ENCODE measurements at regions of chr4 and their contacts with region 1.

Region 1: GRCh38 chr4:112321776-112322684 is 24.9 kb downstream of the ALPK1 start:
- DNase-seq: no peak
- ATAC-seq: peak; percentile 44
- H3K4me3 ChIP-seq: no peak overlapping the region
- H3K27ac ChIP-seq: no peak overlapping the region
- H3K4me1 ChIP-seq: peaks cover 29% of the 10 kb centered on the region
- H3K27me3 ChIP-seq: no peaks in the 10 kb centered on the region
- CTCF ChIP-seq: peak; percentile 76 to 87 (median 77)
- EP300 ChIP-seq: no peak
- POLR2A ChIP-seq: no peak
- RAD21 ChIP-seq: peak; percentile 80

Region 2: DNA sequence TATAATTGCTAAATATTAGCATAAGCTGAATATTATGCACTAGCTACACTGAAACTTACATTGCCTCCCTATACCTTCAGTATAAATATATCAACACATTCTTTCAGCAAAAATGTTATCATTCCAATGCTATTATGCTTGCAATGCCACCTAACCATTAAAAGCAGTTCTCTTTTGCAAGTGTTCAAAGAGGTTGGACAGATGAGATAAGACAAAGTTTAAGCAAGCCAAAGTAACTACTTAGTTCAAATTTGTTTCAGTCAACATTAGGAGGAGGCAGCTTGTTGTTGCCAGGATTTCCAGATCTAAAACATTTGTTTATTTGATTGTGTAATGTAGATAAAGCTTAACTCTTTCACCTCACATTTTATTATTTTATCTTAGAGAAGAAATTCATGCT is 500.7 kb before region 1 on chr4:
- CTCF ChIA-PET with region 1: no interaction called
- POLR2A ChIA-PET with region 1: no interaction called
- RAD21 ChIA-PET with region 1: no interaction called
- SMC1A ChIA-PET with region 1: no interaction called
- in situ Hi-C with region 1: no loop called
- intact Hi-C with region 1: no loop called
- DNase-seq: no peak
- ATAC-seq: no peak
- H3K4me3 ChIP-seq: no peak overlapping the region
- H3K27ac ChIP-seq: no peak overlapping the region
- H3K4me1 ChIP-seq: no peaks in the 10 kb centered on the region
- H3K27me3 ChIP-seq: no peaks in the 10 kb centered on the region
- CTCF ChIP-seq: no peak
- EP300 ChIP-seq: no peak
- POLR2A ChIP-seq: no peak
- RAD21 ChIP-seq: no peak

Region 3: DNA sequence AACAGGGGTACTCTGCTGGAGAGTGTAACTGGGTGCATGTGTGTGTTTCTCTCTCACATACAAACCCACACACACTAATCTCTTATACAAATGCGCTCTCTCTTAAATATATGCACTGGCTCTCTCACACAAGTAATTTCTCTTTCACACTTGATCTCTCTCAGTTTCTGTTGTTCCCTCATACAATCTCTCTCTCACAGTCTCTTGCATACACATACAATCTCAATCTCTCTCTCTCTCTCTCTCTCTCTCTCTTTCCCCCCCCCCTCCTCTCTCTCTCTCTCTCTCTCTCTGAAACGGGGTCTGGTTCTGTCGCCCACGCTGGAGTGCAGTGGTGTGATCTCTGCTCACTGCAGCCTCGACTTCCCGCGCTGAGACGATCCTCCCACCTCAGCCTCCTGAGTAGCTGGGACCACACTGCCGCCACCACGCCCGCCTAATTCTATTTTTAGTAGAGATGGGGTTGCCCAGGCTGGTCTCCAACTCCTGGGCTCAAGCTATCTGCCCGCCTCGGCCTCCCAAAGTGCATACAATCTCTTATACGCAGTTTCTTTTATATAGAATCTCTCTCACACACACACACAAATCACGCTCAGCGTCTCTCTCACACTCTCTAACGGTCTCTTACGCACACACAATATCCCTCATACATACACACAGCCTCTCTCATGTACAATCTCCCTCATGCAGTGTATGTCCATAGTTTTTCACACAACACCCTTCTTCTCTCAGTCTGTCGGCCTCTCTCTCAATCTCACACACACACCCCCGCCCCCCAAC is 177.3 kb before region 1 on chr4:
- CTCF ChIA-PET with region 1: no interaction called
- POLR2A ChIA-PET with region 1: no interaction called
- RAD21 ChIA-PET with region 1: no interaction called
- SMC1A ChIA-PET with region 1: no interaction called
- in situ Hi-C with region 1: no loop called
- intact Hi-C with region 1: no loop called
- DNase-seq: peak; percentile 16
- ATAC-seq: no peak
- H3K4me3 ChIP-seq: no peak overlapping the region; the same call in 1 of the 2 replicates
- H3K27ac ChIP-seq: no peak overlapping the region
- H3K4me1 ChIP-seq: peaks cover 5% of the 10 kb centered on the region; the same call in 1 of the 2 replicates
- H3K27me3 ChIP-seq: peaks cover 0 to 2% of the 10 kb centered on the region in 2 experiments; a peak in 2 of 4 replicates
- CTCF ChIP-seq: no peak
- EP300 ChIP-seq: no peak
- POLR2A ChIP-seq: no peak
- RAD21 ChIP-seq: no peak

Region 4: DNA sequence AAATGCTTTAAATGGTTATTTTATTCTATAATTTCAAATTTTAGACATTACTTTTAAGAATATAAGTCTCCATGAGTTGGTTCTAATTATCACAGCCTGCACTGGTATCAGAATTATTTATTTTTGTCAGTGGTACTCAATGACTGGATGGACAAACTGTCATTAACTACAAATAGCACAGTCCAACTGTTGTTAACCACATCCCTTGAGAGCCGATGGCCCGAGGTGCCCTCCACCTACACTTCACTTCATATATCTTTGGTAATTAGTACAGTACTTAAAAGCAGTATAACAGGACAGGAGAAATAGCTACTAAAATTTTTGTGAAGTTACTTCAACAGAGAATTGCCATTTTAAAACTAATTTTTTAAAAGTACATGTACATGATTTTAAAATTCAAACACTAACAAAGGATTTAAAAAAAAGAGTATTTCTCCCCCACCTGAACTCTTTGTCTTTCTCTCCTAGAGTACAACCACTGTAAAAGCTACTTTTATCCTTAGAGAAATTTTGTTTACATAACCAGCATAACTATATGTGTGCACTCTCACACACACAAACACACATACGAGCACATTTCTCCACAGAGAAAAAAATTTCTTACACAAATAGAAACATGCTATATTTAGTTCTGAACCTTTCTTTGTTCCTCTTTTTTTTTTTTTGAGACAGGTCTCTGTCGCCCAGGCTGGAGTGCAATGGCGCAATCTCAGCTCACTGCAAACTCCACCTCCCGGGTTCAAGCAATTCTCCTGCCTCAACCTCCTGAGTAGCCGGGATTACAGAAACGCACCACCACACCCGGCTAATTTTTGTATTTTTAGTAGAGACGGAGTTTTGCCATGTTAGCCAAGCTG is 42.8 kb before region 1 on chr4:
- CTCF ChIA-PET with region 1: interaction called, 21 read pairs
- POLR2A ChIA-PET with region 1: interaction called, 25 read pairs
- RAD21 ChIA-PET with region 1: interaction called, 151 read pairs
- SMC1A ChIA-PET with region 1: interaction called, 247 read pairs
- in situ Hi-C with region 1: loop called (anchors 5 kb)
- intact Hi-C with region 1: no loop called
- DNase-seq: no peak
- ATAC-seq: peak; percentile 65
- H3K4me3 ChIP-seq: peak overlapping the region; percentile 80
- H3K27ac ChIP-seq: peak overlapping the region; percentile 99
- H3K4me1 ChIP-seq: peaks cover 33% of the 10 kb centered on the region
- H3K27me3 ChIP-seq: no peaks in the 10 kb centered on the region
- CTCF ChIP-seq: no peak
- EP300 ChIP-seq: peak; percentile 46 to 49; a peak in 2 of 4 replicates
- POLR2A ChIP-seq: no peak
- RAD21 ChIP-seq: no peak

Region 5: DNA sequence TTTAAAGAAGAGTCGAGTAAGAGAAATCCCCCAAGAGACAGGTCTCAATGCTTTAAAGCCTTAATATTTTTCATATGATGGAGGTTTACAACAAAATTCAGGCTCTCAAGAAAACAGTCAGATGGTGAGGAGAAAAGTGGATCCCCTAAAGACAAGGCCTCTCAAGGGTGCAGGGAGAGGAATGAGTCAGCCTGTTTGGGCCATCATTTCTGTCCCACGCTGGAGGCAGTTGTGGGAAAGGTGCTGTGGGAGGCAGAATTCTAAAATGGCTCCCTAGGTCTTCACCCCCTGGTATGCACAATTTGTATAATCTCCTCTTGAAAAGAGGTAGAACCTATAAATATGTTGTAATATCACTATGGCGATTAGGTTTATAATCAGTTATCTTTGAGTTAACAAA is 31.7 kb before region 1 on chr4:
- CTCF ChIA-PET with region 1: interaction called, 27 read pairs
- POLR2A ChIA-PET with region 1: interaction called, 25 read pairs
- RAD21 ChIA-PET with region 1: interaction called, 151 read pairs
- SMC1A ChIA-PET with region 1: interaction called, 247 read pairs
- in situ Hi-C with region 1: no loop called
- intact Hi-C with region 1: loop called (anchors 1 kb)
- DNase-seq: no peak
- ATAC-seq: peak; percentile 14
- H3K4me3 ChIP-seq: 0 out of 2 replicates have a peak overlapping the region, but pooled peaks have one; percentile 37
- H3K27ac ChIP-seq: peak overlapping the region; percentile 99
- H3K4me1 ChIP-seq: peaks cover 24% of the 10 kb centered on the region
- H3K27me3 ChIP-seq: no peaks in the 10 kb centered on the region
- CTCF ChIP-seq: no peak
- EP300 ChIP-seq: no peak
- POLR2A ChIP-seq: no peak
- RAD21 ChIP-seq: 0 out of 2 replicates have a peak, but pooled peaks have one; percentile 18

Region 6: GRCh38 chr4:112296949-112297880 is 24.8 kb before region 1 on chr4 and contains the start of gene ALPK1:
- CTCF ChIA-PET with region 1: interaction called, 9 read pairs
- POLR2A ChIA-PET with region 1: interaction called, 9 read pairs
- RAD21 ChIA-PET with region 1: interaction called, 41 read pairs
- SMC1A ChIA-PET with region 1: interaction called, 74 read pairs
- in situ Hi-C with region 1: no loop called
- intact Hi-C with region 1: no loop called
- DNase-seq: no peak
- ATAC-seq: peak; percentile 89
- H3K4me3 ChIP-seq: peak within 1 kb of the TSS; percentile 67
- H3K27ac ChIP-seq: peak within 1 kb of the TSS; percentile 62
- H3K4me1 ChIP-seq: peaks cover 7% of the 10 kb centered on the region
- H3K27me3 ChIP-seq: no peaks in the 10 kb centered on the region
- CTCF ChIP-seq: no peak
- EP300 ChIP-seq: no peak
- POLR2A ChIP-seq: no peak
- RAD21 ChIP-seq: no peak
- polyA plus RNA-seq, gene ALPK1: 8.5 to 9.7 TPM

Region 7: GRCh38 chr4:112302320-112303274 is 19.4 kb before region 1 on chr4:
- CTCF ChIA-PET with region 1: interaction called, 9 read pairs
- POLR2A ChIA-PET with region 1: interaction called, 9 read pairs
- RAD21 ChIA-PET with region 1: interaction called, 41 read pairs
- SMC1A ChIA-PET with region 1: interaction called, 74 read pairs
- in situ Hi-C with region 1: no loop called
- intact Hi-C with region 1: no loop called
- DNase-seq: no peak
- ATAC-seq: peak; percentile 83
- H3K4me3 ChIP-seq: no peak overlapping the region; the same call in 1 of the 2 replicates
- H3K27ac ChIP-seq: peak overlapping the region; percentile 67
- H3K4me1 ChIP-seq: peaks cover 17% of the 10 kb centered on the region
- H3K27me3 ChIP-seq: no peaks in the 10 kb centered on the region
- CTCF ChIP-seq: no peak
- EP300 ChIP-seq: no peak
- POLR2A ChIP-seq: no peak
- RAD21 ChIP-seq: no peak

Region 8: DNA sequence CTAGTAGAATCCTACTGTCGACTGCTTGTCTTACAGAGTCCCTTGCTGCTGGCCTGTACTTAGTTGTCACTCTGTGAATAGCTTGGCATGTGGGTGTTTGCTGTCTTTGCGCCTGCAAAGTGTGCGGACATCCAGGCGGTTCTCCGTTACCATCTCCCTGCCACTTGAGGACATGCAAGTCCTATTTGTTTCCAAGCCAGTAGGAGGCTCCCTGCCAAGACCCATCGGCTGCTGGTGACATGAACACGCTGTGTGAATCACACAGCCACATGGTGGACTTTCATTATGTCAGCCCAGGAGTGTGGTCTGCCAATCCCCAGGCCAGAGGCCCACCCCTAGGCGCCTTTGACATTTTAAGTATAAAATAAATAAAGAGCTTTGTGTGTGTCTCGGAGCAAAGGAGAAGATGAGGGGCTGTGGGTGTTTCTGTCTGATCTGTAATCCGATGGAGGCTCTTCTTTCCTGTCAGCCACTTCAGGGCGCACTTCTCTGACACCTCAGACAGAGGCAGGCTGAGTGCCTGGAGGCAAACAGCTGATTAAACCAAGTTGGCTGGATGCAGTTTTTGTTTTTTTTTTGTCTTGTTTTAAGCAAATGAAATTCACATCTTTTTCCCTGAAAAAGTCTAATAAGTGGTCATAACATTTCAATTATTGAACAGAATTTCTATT is 26.6 kb after region 1 on chr4:
- CTCF ChIA-PET with region 1: no interaction called
- POLR2A ChIA-PET with region 1: no interaction called
- RAD21 ChIA-PET with region 1: no interaction called
- SMC1A ChIA-PET with region 1: no interaction called
- in situ Hi-C with region 1: no loop called
- intact Hi-C with region 1: no loop called
- DNase-seq: no peak
- ATAC-seq: no peak
- H3K4me3 ChIP-seq: no peak overlapping the region
- H3K27ac ChIP-seq: no peak overlapping the region
- H3K4me1 ChIP-seq: no peaks in the 10 kb centered on the region
- H3K27me3 ChIP-seq: no peaks in the 10 kb centered on the region
- CTCF ChIP-seq: no peak
- EP300 ChIP-seq: no peak
- POLR2A ChIP-seq: no peak
- RAD21 ChIP-seq: no peak

Region 9: GRCh38 chr4:112515304-112516067 is 193.5 kb after region 1 on chr4:
- CTCF ChIA-PET with region 1: interaction called, 221 read pairs
- POLR2A ChIA-PET with region 1: interaction called, 14 read pairs
- RAD21 ChIA-PET with region 1: interaction called, 24 read pairs
- SMC1A ChIA-PET with region 1: interaction called, 124 read pairs
- in situ Hi-C with region 1: loop called (anchors 5 kb)
- intact Hi-C with region 1: no loop called
- DNase-seq: no peak
- ATAC-seq: peak; percentile 65
- H3K4me3 ChIP-seq: peak overlapping the region; percentile 80
- H3K27ac ChIP-seq: peak overlapping the region; percentile 57
- H3K4me1 ChIP-seq: peaks cover 4% of the 10 kb centered on the region
- H3K27me3 ChIP-seq: peaks cover 5 to 14% of the 10 kb centered on the region in 2 experiments
- CTCF ChIP-seq: no peak
- EP300 ChIP-seq: no peak
- POLR2A ChIP-seq: peak; percentile 68
- RAD21 ChIP-seq: no peak

Region 10: DNA sequence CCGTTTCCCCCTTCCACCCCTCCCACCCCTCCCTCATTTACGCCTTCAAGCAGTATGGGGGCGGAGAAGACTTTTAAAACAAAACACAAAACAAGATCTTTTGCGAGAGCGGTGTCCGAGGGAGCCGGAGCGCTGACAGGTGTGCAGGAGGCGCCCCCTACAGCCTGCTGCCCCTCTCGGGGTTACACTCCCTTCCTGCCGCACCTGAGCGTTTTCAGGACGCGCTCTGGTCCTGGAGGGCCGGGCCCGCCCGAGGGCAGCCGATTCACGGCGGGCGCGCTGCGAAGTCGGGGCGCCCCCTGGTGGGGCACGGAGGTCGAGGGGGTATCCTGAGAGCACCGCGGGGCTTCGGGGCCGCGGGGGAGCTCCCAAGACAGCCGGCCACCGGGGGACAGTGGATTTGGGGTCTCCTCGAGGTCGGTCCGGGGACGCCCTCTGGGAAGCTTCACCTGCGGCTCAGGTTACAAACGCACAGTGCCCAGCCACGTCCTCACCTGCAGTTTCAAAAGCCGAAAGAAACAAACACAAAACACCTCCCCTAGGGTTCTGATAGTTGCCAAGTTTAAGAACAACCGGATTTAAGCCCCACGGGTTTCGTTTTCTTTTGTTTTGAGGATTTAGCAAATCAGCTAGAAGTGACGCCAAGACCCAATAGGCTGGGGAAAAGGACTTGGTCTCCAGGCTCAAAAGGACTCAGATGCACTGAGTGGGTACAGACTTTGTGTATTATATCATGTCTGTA is 201.9 kb after region 1 on chr4:
- CTCF ChIA-PET with region 1: interaction called, 221 read pairs
- POLR2A ChIA-PET with region 1: interaction called, 4 read pairs
- RAD21 ChIA-PET with region 1: interaction called, 72 read pairs
- SMC1A ChIA-PET with region 1: interaction called, 124 read pairs
- in situ Hi-C with region 1: loop called (anchors 5 kb)
- intact Hi-C with region 1: no loop called
- DNase-seq: no peak
- ATAC-seq: peak; percentile 96
- H3K4me3 ChIP-seq: peak overlapping the region; percentile 73; the same call in 1 of the 2 replicates
- H3K27ac ChIP-seq: no peak overlapping the region
- H3K4me1 ChIP-seq: peaks cover 3% of the 10 kb centered on the region
- H3K27me3 ChIP-seq: no peaks in the 10 kb centered on the region; a peak in 2 of 4 replicates
- CTCF ChIP-seq: peak; percentile 88 to 92 (median 90)
- EP300 ChIP-seq: no peak
- POLR2A ChIP-seq: no peak
- RAD21 ChIP-seq: peak; percentile 85

Region 11: DNA sequence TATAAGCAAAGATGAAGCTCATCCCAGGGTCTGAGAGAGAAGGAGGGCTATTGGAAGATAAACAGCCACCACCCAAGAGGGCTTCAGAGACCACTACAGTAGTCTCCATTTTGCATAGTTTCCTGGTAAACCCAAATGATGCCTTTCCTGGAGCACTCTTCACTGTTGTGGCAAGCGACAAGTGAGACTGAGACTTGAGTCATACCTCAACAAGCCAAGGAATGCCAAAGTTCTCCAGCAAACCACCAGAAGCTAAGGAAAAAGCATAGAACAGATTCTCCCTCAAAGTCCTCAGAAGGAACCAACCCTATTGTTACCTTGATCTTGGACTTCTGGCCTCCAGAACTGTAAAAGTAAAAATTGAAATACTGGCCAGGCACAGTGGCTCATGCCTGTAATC is 380.9 kb after region 1 on chr4:
- CTCF ChIA-PET with region 1: no interaction called
- POLR2A ChIA-PET with region 1: no interaction called
- RAD21 ChIA-PET with region 1: no interaction called
- SMC1A ChIA-PET with region 1: no interaction called
- in situ Hi-C with region 1: no loop called
- intact Hi-C with region 1: no loop called
- DNase-seq: no peak
- ATAC-seq: no peak
- H3K4me3 ChIP-seq: no peak overlapping the region
- H3K27ac ChIP-seq: no peak overlapping the region
- H3K4me1 ChIP-seq: no peaks in the 10 kb centered on the region
- H3K27me3 ChIP-seq: peaks cover 7 to 12% of the 10 kb centered on the region in 2 experiments
- CTCF ChIP-seq: no peak
- EP300 ChIP-seq: no peak
- POLR2A ChIP-seq: no peak
- RAD21 ChIP-seq: no peak

Measured in GM12878 (cell line).